Lower leg skin (tissue), 4 donors: ENCODE measurements at regions of chr12 and their contacts with region 1.

Region 1: GRCh38 chr12:32290411-32290810 is 108.9 kb upstream of the FGD4 start:
- DNase-seq: no peak
- H3K4me3 ChIP-seq: no peak overlapping the region
- CTCF ChIP-seq: no peak
- POLR2A ChIP-seq: no peak

Region 2: DNA sequence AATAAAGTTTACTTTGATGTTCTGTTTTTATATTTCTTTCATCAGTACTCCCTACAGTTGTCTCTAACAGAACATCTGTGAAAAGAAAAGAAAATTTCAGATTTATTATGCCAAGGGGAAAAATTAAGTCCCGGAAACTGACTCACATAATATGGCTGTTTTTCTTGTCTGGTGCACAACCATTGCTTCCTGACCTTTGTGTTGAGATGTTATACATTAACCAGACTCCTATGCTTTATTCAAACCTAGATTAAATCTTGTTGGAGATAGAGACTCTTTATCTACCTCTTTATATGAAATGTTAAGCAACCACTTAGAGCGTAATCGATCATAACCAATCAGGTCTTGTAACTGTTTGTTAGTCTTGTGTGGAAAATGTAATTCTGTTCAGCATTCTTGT is 221.3 kb before region 1 on chr12:
- intact Hi-C with region 1: loop called (anchors 10 kb)
- DNase-seq: no peak
- H3K4me3 ChIP-seq: no peak overlapping the region
- CTCF ChIP-seq: no peak
- POLR2A ChIP-seq: no peak